B cell (primary cell): ENCODE measurements at regions of chr3 and their contacts with region 1.

Region 1: DNA sequence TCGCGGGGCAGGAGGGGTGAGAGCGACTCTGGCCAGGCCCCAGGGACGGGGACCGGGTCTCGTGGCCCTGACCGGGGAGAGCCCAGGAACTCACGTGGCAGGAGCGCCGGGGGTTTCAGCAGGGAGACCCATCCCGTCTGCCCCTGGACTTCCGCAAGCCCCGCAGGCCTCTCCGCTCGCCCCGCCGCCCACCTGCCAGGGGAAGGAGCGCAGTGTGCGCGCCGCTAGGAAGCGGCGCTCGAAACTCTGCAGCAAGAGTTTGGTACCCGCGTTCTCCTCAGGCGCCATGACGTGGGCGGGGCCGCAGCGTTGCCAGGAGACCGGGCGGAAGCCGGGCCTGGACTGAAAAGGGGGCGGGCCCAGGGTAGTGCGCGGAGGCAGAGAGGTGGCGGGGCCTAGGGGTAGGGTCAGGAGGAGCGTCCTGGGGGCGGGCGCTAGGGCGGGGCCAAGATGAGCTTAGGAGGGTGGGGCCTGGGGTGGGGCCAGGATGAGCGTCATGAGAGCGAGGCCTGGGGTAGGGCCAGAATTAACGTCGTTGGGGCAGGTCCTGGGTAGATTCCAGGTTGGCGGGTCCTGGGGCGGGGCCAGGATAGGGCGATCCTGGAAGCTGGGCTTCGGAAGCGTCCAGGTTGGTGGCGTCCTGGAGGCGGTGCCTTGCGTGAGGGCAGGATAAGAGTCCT is 29.7 kb downstream of the ALG1L2 start:
- DNase-seq: peak; percentile 98
- ATAC-seq: peak; percentile 100
- H3K4me3 ChIP-seq: peak overlapping the region in 4 of 5 experiments; percentile 69 to 86 (median 77)
- H3K4me3 Mint-ChIP-seq: peak overlapping the region; percentile 99
- H3K27ac ChIP-seq: peak overlapping the region; percentile 88
- H3K27ac Mint-ChIP-seq: peak overlapping the region; percentile 100
- H3K4me1 ChIP-seq: peaks cover 0 to 10% of the 10 kb centered on the region in 2 donors
- H3K4me1 Mint-ChIP-seq: peaks cover 14% of the 10 kb centered on the region
- H3K27me3 ChIP-seq: no peaks in the 10 kb centered on the region
- H3K27me3 Mint-ChIP-seq: no peaks in the 10 kb centered on the region
- CTCF ChIP-seq: no peak

Region 2: DNA sequence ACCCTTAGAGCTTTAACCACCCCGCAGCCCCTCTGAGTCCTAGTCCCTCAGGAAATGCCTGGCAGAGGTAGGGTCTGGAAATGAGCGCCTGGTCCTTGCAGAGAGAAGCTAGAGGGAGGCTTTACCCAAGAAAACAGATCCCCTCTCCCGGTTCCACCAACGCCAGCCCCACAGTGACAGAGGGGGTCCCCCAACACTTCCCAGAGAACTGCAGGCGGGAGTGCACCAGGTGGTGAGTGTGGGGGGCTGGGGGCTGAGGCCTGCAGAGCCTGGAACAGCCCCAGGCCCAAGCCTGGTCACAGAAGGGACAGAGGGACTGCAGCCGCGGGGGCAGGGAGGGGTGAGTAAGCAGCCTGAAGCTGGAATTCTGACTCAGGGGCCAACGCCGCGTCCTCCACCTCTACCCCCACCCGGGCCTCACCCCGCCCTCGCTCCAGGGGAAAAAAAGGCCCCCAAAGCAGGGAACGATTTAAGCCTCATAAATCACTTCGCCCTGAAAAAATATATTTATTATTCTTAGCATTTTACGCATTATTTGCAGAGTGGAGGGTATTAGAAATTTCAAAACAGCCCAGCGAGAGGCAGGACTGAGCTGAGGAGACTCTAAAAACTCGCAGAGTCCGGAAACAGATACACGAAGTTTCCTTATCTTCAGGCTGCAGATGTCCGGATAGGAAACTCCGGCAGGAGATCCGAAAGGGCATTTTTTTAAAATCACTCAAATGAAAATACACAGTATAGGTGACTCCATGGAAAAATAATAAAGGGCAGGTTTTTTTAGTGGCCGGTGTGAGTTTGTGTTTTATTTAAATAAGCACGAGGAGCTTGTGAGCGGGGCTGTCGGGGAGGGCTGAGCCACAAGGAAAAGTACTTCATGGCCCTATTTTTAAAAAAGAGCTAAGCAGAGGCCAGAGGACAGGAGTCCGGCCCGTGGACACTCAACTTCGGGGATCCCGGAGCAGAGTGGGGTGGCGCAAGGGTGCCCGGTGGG is 1628.4 kb before region 1 on chr3:
- CTCF ChIA-PET with region 1: no interaction called
- POLR2A ChIA-PET with region 1: no interaction called
- intact Hi-C with region 1: no loop called
- DNase-seq: no peak
- ATAC-seq: no peak
- H3K4me3 ChIP-seq: no peak overlapping the region
- H3K4me3 Mint-ChIP-seq: peak overlapping the region; percentile 73
- H3K27ac ChIP-seq: no peak overlapping the region
- H3K27ac Mint-ChIP-seq: no peak overlapping the region
- H3K4me1 ChIP-seq: peaks cover 30% of the 10 kb centered on the region in 2 donors
- H3K4me1 Mint-ChIP-seq: peaks cover 29% of the 10 kb centered on the region
- H3K27me3 ChIP-seq: peaks cover 0 to 78% (median 25%) of the 10 kb centered on the region in 4 experiments
- H3K27me3 Mint-ChIP-seq: peaks cover 54% of the 10 kb centered on the region
- CTCF ChIP-seq: no peak

Region 3: DNA sequence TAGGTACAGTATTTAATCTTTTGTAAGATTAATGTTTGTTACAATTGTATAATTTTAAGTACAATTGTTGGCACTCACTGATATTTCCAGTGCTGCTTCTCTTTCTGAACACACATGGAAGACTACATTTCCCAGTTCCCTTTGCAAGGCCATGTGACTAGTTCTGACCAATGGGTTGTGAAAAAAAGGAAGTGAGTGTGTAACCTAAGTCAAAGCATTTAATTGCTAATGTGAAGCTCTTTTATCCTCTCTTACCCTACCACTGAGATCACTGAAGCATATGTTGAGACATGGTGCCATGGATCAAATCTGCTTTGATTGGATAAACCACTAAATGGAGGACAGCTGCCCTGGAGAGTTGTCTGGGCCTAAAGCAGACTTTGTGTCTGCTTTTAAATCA is 420.9 kb before region 1 on chr3:
- CTCF ChIA-PET with region 1: no interaction called
- POLR2A ChIA-PET with region 1: no interaction called
- intact Hi-C with region 1: loop called (anchors 5 kb)
- DNase-seq: peak; percentile 81
- ATAC-seq: peak; percentile 98
- H3K4me3 ChIP-seq: no peak overlapping the region
- H3K4me3 Mint-ChIP-seq: no peak overlapping the region
- H3K27ac ChIP-seq: peak overlapping the region in 1 of 2 donors; percentile 45
- H3K27ac Mint-ChIP-seq: peak overlapping the region; percentile 75
- H3K4me1 ChIP-seq: peaks cover 3 to 4% of the 10 kb centered on the region in 2 donors
- H3K4me1 Mint-ChIP-seq: peaks cover 6% of the 10 kb centered on the region
- H3K27me3 ChIP-seq: no peaks in the 10 kb centered on the region
- H3K27me3 Mint-ChIP-seq: no peaks in the 10 kb centered on the region
- CTCF ChIP-seq: no peak

Region 4: DNA sequence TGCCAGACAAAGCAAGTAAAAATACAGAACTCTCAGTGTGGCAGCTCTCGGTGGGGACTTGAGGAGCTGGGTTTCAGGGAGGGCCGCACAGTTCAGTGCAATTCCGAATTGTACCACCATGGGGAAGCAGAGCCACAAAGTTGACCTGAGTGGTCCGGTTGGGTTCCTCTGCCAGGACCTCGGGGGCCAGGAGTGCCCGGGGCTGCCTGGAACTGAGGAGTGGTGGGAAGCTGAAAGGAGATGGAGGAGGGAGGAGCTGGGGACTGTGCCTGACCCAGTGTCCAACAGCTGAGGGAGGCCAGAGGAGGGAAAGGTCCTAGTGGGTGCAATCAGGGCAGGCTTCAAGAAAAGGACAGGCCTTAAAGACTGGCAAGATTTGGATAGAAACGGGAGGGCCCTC is 169.0 kb before region 1 on chr3:
- CTCF ChIA-PET with region 1: interaction called, 17 read pairs
- POLR2A ChIA-PET with region 1: no interaction called
- intact Hi-C with region 1: loop called (anchors 2 kb)
- DNase-seq: peak; percentile 61
- ATAC-seq: peak; percentile 66
- H3K4me3 ChIP-seq: no peak overlapping the region
- H3K4me3 Mint-ChIP-seq: no peak overlapping the region
- H3K27ac ChIP-seq: no peak overlapping the region
- H3K27ac Mint-ChIP-seq: no peak overlapping the region
- H3K4me1 ChIP-seq: no peaks in the 10 kb centered on the region
- H3K4me1 Mint-ChIP-seq: no peaks in the 10 kb centered on the region
- H3K27me3 ChIP-seq: no peaks in the 10 kb centered on the region
- H3K27me3 Mint-ChIP-seq: peaks cover 16% of the 10 kb centered on the region
- CTCF ChIP-seq: peak; percentile 60

Region 5: GRCh38 chr3:130093741-130094391 is 17.5 kb before region 1 on chr3:
- CTCF ChIA-PET with region 1: interaction called, 9 read pairs
- POLR2A ChIA-PET with region 1: no interaction called
- intact Hi-C with region 1: loop called (anchors 1 kb)
- DNase-seq: peak; percentile 54
- ATAC-seq: peak; percentile 63
- H3K4me3 ChIP-seq: peak overlapping the region in 4 of 5 experiments; percentile 10 to 44 (median 41)
- H3K4me3 Mint-ChIP-seq: peak overlapping the region; percentile 72
- H3K27ac ChIP-seq: peak overlapping the region in 1 of 2 donors; percentile 41
- H3K27ac Mint-ChIP-seq: peak overlapping the region; percentile 79
- H3K4me1 ChIP-seq: peaks cover 11 to 22% of the 10 kb centered on the region in 2 donors
- H3K4me1 Mint-ChIP-seq: peaks cover 29% of the 10 kb centered on the region
- H3K27me3 ChIP-seq: no peaks in the 10 kb centered on the region
- H3K27me3 Mint-ChIP-seq: no peaks in the 10 kb centered on the region
- CTCF ChIP-seq: no peak

Region 6: GRCh38 chr3:130746246-130747039 is 635.1 kb after region 1 on chr3 and contains the start of gene PIK3R4:
- CTCF ChIA-PET with region 1: no interaction called
- POLR2A ChIA-PET with region 1: no interaction called
- intact Hi-C with region 1: loop called (anchors 10 kb)
- DNase-seq: peak; percentile 97
- ATAC-seq: peak; percentile 85
- H3K4me3 ChIP-seq: peak within 1 kb of the TSS; percentile 71 to 96 (median 95)
- H3K4me3 Mint-ChIP-seq: peak within 1 kb of the TSS; percentile 96
- H3K27ac ChIP-seq: peak within 1 kb of the TSS; percentile 76 to 93
- H3K27ac Mint-ChIP-seq: peak within 1 kb of the TSS; percentile 95
- H3K4me1 ChIP-seq: peaks cover 24 to 28% of the 10 kb centered on the region in 2 donors
- H3K4me1 Mint-ChIP-seq: peaks cover 42% of the 10 kb centered on the region
- H3K27me3 ChIP-seq: no peaks in the 10 kb centered on the region
- H3K27me3 Mint-ChIP-seq: no peaks in the 10 kb centered on the region
- CTCF ChIP-seq: no peak
- total RNA-seq, gene PIK3R4: 27.1 and 32.8 TPM in 2 replicates

Region 7: GRCh38 chr3:131026321-131027178 is 915.2 kb after region 1 on chr3 and contains the starts of genes ASTE1 and NEK11:
- CTCF ChIA-PET with region 1: no interaction called
- POLR2A ChIA-PET with region 1: no interaction called
- intact Hi-C with region 1: loop called (anchors 5 kb)
- DNase-seq: peak; percentile 94
- ATAC-seq: peak; percentile 97
- H3K4me3 ChIP-seq: peak within 1 kb of the TSS; percentile 90 to 95 (median 91)
- H3K4me3 Mint-ChIP-seq: peak within 1 kb of the TSS; percentile 97
- H3K27ac ChIP-seq: peak within 1 kb of the TSS; percentile 91 to 94
- H3K27ac Mint-ChIP-seq: peak within 1 kb of the TSS; percentile 98
- H3K4me1 ChIP-seq: peaks cover 31 to 32% of the 10 kb centered on the region in 2 donors
- H3K4me1 Mint-ChIP-seq: peaks cover 48% of the 10 kb centered on the region
- H3K27me3 ChIP-seq: no peaks in the 10 kb centered on the region
- H3K27me3 Mint-ChIP-seq: no peaks in the 10 kb centered on the region
- CTCF ChIP-seq: no peak
- total RNA-seq, gene ASTE1: 21.8 and 23.0 TPM in 2 replicates
- total RNA-seq, gene NEK11: 5.7 and 7.7 TPM in 2 replicates